Sigmoid colon (tissue), 7 donors: ENCODE measurements at regions of chr5 and their contacts with region 1.

Region 1: DNA sequence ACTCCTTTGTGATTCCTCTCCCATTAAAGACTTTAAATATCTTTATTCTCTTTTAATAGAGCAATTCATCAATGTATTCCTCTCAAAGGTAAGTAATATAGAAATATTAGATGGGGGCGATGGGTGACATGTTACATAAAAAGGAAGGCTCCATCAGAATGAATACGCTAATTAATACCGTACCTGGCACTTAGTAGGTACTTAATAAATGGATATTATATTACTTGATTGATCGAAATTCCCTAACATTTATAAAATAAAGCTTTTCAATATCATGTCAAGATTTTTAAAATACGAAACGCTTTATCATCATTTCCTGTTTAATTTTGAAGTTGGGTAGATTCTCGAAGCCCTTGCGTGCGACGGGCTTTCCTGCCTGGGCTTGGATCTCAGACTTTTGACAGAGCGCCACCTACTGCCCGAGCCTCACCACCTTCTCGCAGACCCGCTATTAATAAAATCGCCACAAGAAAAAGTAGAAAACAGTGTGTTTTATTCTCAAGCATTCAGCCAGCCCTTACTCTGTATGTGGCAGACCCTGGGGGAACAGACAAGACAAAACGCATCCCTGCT is 99.4 kb downstream of the C5orf15 start:
- DNase-seq: peak; percentile 79
- H3K4me3 ChIP-seq: no peak overlapping the region
- H3K27ac ChIP-seq: no peak overlapping the region
- H3K4me1 ChIP-seq: peaks cover 0 to 14% (median 0%) of the 10 kb centered on the region in 4 donors
- H3K27me3 ChIP-seq: no peaks in the 10 kb centered on the region
- CTCF ChIP-seq: peak; percentile 29 to 74 (median 60)
- EP300 ChIP-seq: no peak
- POLR2A ChIP-seq: no peak

Region 2: DNA sequence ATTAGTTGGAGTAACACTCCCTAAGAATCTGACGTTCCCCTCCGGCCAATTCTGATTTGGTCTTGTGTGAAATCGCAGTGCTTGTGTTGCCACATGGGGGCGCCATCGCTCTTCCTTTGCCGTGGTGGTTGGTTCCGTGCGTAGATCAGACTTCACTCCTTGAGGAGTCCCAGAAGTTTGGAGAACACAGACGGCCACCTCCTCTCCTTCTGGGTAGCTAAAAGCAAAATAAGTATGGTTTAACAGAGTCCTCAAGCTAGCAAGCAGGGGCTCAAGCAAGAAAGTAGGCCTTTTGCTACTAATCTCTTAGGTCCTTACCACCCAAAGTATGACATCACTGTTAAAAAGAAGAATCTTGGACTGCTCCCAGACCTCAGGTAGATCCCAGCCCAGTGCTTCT is 757.7 kb before region 1 on chr5:
- intact Hi-C with region 1: loop called (anchors 2 kb)
- DNase-seq: peak; percentile 90
- H3K4me3 ChIP-seq: no peak overlapping the region
- H3K27ac ChIP-seq: no peak overlapping the region
- H3K4me1 ChIP-seq: peaks cover 0 to 8% (median 3%) of the 10 kb centered on the region in 4 donors
- H3K27me3 ChIP-seq: peaks cover 0 to 4% (median 0%) of the 10 kb centered on the region in 3 donors
- CTCF ChIP-seq: peak; percentile 77 to 90 (median 86)
- EP300 ChIP-seq: no peak
- POLR2A ChIP-seq: no peak

Region 3: DNA sequence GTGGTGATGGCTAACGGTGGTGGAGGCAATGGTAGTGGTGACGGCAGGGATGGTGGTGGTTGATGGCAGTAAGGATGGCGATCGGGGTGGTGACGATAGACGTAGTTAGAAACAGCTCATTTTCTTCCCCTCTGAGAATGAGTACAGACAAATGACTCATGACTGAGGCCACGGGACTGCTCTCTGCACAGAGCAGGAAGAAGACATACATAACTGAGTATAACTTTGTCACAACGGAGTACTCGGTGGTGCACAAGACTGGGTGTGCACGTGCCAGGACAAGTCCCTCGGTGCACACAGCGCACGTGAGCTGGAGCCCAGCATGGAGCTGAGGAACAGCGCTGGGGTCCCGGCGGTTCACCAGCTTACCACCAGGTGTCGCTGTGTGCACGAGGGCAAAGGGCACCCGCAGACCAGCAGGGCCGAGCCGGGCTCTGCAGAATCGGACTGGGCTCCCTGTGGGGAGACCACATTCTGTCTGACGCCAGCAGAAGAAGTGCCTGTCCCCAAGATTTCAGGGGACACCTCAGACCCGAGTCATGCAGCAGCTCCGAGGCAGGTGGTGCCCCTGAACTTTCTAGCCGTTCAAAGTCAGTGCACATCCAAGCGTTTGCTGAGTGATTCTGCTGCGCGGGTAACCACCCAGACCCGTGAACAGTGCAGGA is 445.3 kb before region 1 on chr5:
- intact Hi-C with region 1: loop called (anchors 2 kb)
- DNase-seq: no peak
- H3K4me3 ChIP-seq: no peak overlapping the region
- H3K27ac ChIP-seq: no peak overlapping the region
- H3K4me1 ChIP-seq: peaks cover 0 to 4% (median 0%) of the 10 kb centered on the region in 4 donors
- H3K27me3 ChIP-seq: no peaks in the 10 kb centered on the region
- CTCF ChIP-seq: peak; percentile 38 to 84 (median 74)
- EP300 ChIP-seq: no peak
- POLR2A ChIP-seq: no peak

Region 4: GRCh38 chr5:133552931-133553525 is 316.0 kb before region 1 on chr5:
- intact Hi-C with region 1: loop called (anchors 5 kb)
- DNase-seq: peak; percentile 69
- H3K4me3 ChIP-seq: no peak overlapping the region
- H3K27ac ChIP-seq: no peak overlapping the region
- H3K4me1 ChIP-seq: no peaks in the 10 kb centered on the region
- H3K27me3 ChIP-seq: peaks cover 0 to 3% (median 0%) of the 10 kb centered on the region in 3 donors
- CTCF ChIP-seq: peak in 3 of 4 experiments; percentile 24 to 40 (median 27)
- EP300 ChIP-seq: no peak
- POLR2A ChIP-seq: no peak

Region 5: GRCh38 chr5:134374232-134374631 is 505.2 kb after region 1 on chr5:
- intact Hi-C with region 1: no loop called
- DNase-seq: no peak
- H3K4me3 ChIP-seq: no peak overlapping the region
- H3K27ac ChIP-seq: no peak overlapping the region
- H3K4me1 ChIP-seq: peaks cover 0 to 44% (median 32%) of the 10 kb centered on the region in 4 donors
- H3K27me3 ChIP-seq: no peaks in the 10 kb centered on the region
- CTCF ChIP-seq: no peak
- EP300 ChIP-seq: no peak
- POLR2A ChIP-seq: no peak